OCI-LY7 (cell line): ENCODE measurements at regions of chr1 and their contacts with region 1.

Region 1: GRCh38 chr1:184805667-184806295 is 51.1 kb upstream of the EDEM3 start:
- DNase-seq: peak; percentile 71
- H3K4me3 ChIP-seq: no peak overlapping the region
- H3K27ac ChIP-seq: no peak overlapping the region
- H3K4me1 ChIP-seq: no peaks in the 10 kb centered on the region
- CTCF ChIP-seq: peak; percentile 90

Region 2: DNA sequence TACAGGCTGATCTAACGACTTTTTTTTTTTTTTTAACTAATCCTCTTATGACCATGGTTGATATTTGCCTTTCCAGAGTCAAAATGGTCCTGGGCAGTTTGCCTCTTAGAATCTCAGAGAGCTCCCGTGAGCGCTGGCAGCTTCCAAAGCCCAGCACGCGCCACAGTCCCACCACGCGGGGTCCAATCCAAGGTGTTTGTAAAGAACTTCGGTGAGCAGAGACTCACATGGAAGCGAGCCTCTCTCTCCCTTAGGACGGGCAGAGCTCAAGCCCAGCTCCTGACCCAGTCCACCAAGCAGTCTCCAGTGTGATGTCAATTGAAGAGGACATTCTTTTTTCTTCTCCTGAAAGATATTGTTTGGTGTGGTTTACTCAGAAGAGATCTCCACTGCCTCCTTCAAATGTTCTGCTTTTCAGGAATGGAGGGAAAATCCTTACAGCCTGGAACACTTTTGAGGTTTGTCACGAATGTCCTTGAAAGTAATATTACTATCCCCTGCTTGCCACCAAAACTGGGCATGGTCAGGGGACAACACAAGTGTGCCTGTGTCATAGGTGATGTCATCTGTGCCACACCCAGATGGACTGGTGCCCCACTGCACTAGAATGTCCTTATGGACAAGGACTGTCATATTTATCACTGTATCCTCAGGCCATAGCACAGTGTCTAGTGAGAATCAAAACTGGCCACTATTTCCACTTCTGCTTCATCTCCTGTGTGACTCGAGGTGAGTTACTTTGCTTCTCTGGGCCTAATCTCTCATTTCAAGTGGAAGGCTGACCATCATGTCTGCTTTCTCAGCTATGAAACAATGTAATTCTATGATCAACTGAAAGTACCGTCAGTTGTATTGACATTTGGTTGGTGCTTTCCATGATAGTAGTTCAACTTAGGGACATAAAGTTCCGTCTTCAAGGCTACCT is 46.3 kb after region 1 on chr1:
- CTCF ChIA-PET with region 1: no interaction called
- POLR2A ChIA-PET with region 1: no interaction called
- intact Hi-C with region 1: no loop called
- DNase-seq: no peak
- H3K4me3 ChIP-seq: no peak overlapping the region
- H3K27ac ChIP-seq: no peak overlapping the region
- H3K4me1 ChIP-seq: no peaks in the 10 kb centered on the region
- CTCF ChIP-seq: no peak

Region 3: DNA sequence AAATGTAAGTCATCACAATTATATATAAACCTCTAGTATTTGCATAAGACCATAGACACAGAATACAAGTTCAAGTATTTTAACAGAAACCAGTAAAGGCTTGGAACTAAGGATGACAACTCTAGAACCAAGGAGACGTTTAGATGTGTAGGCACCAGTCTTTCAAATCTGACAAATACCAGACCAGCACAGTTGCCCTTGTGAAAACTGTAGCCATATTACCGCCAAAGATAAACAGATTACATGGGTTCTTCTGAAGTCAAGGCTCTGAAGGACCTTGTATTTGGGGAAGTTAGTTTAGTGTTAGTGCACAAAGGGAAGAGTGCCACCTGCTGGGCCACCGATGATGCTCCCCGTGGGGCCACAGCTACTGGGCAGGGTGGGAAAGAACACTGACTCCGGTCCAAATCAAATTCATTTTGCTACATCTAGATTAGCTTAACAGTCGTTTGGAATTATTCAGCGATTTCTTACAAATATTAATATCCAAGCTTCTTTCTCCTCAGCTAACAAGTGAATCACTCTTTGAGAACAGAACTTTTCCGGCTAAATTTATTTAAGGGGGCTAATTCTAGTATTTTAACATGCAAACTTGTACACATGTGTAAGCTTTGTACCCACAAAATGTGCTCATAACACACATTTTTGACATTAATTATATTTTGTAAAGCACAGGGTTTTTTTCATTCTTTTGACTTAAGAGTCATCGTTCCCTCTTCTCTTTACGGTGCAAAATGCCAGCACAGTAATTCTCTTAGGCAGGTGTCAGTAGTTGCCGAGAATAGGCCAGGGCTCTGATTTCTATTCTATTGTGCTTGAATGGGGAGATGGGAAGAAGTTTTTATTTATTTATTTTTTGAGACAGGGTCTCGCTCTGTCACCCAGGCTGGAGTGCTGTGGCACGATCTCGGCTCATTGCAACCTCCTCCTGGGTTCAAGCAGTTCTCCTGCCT is 176.5 kb after region 1 on chr1:
- CTCF ChIA-PET with region 1: interaction called, 3 read pairs
- POLR2A ChIA-PET with region 1: interaction called, 3 read pairs
- intact Hi-C with region 1: loop called (anchors 1 kb)
- DNase-seq: peak; percentile 59
- H3K4me3 ChIP-seq: no peak overlapping the region
- H3K27ac ChIP-seq: no peak overlapping the region
- H3K4me1 ChIP-seq: no peaks in the 10 kb centered on the region
- CTCF ChIP-seq: peak; percentile 94

Region 4: GRCh38 chr1:185170291-185170848 is 364.6 kb after region 1 on chr1:
- CTCF ChIA-PET with region 1: interaction called, 9 read pairs
- POLR2A ChIA-PET with region 1: interaction called, 6 read pairs
- intact Hi-C with region 1: loop called (anchors 1 kb)
- DNase-seq: peak; percentile 77
- H3K4me3 ChIP-seq: no peak overlapping the region
- H3K27ac ChIP-seq: no peak overlapping the region
- H3K4me1 ChIP-seq: no peaks in the 10 kb centered on the region
- CTCF ChIP-seq: peak; percentile 100

Region 5: DNA sequence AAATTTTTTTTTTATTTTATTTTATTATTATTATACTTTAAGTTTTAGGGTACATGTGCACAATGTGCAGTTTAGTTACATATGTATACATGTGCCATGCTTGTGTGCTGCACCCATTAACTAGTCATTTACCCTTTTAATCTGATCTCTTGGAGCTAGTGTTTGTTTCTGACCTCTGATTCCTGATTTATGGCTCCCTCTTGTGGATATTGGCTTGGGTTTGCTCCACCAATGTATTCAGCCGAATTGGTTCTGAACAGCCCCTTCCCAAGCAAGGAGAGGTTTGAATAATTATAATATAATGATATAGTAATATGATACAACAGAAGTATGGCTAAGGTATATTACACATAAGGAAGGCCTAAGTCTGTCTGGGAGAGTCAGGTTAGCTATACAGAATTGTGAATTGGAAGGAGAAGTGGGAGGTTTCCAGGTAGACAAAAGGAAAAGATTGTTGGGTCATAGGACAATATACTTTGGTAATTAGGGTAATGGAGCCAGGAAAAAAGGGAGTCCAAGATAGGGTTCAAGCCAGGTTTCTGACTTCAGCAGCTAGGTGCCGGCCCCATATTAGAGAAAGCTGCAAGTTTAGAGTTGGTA is 875.4 kb after region 1 on chr1:
- CTCF ChIA-PET with region 1: no interaction called
- POLR2A ChIA-PET with region 1: no interaction called
- intact Hi-C with region 1: loop called (anchors 10 kb)
- DNase-seq: peak; percentile 36
- H3K4me3 ChIP-seq: no peak overlapping the region
- H3K27ac ChIP-seq: no peak overlapping the region
- H3K4me1 ChIP-seq: no peaks in the 10 kb centered on the region
- CTCF ChIP-seq: peak; percentile 71